Activated B cell treated with CpG ODN at 0.5 μM for 24 hours (primary cell): ENCODE measurements at regions of chr13 and their contacts with region 1.

Region 1: GRCh38 chr13:49792550-49793324 is at the start of gene KPNA3:
- DNase-seq: peak; percentile 88
- ATAC-seq: peak; percentile 89
- H3K4me3 Mint-ChIP-seq: peak within 1 kb of the TSS; percentile 97
- H3K27ac Mint-ChIP-seq: peak within 1 kb of the TSS; percentile 97
- H3K4me1 Mint-ChIP-seq: peaks cover 31% of the 10 kb centered on the region
- H3K27me3 Mint-ChIP-seq: no peaks in the 10 kb centered on the region
- CTCF ChIP-seq: no peak
- total RNA-seq, gene KPNA3: 28.6 and 28.7 TPM in 2 replicates

Region 2: GRCh38 chr13:48094781-48095502 is 1697.8 kb before region 1 on chr13 and contains the start of gene MED4:
- CTCF ChIA-PET with region 1: no interaction called
- POLR2A ChIA-PET with region 1: no interaction called
- intact Hi-C with region 1: loop called (anchors 2 kb)
- DNase-seq: peak; percentile 99
- ATAC-seq: peak; percentile 99
- H3K4me3 Mint-ChIP-seq: peak within 1 kb of the TSS; percentile 96
- H3K27ac Mint-ChIP-seq: peak within 1 kb of the TSS; percentile 90
- H3K4me1 Mint-ChIP-seq: peaks cover 34% of the 10 kb centered on the region
- H3K27me3 Mint-ChIP-seq: peaks cover 5% of the 10 kb centered on the region
- CTCF ChIP-seq: peak; percentile 84
- total RNA-seq, gene MED4: 50.4 and 51.9 TPM in 2 replicates

Region 3: GRCh38 chr13:49585220-49586157 is 207.2 kb before region 1 on chr13 and contains the start of gene RCBTB1:
- CTCF ChIA-PET with region 1: no interaction called
- POLR2A ChIA-PET with region 1: interaction called, 3 read pairs
- intact Hi-C with region 1: loop called (anchors 1 kb)
- DNase-seq: peak; percentile 73
- ATAC-seq: peak; percentile 87
- H3K4me3 Mint-ChIP-seq: peak within 1 kb of the TSS; percentile 90
- H3K27ac Mint-ChIP-seq: peak within 1 kb of the TSS; percentile 86
- H3K4me1 Mint-ChIP-seq: peaks cover 31% of the 10 kb centered on the region
- H3K27me3 Mint-ChIP-seq: no peaks in the 10 kb centered on the region
- CTCF ChIP-seq: no peak
- total RNA-seq, gene RCBTB1: 19.7 and 22.6 TPM in 2 replicates

Region 4: DNA sequence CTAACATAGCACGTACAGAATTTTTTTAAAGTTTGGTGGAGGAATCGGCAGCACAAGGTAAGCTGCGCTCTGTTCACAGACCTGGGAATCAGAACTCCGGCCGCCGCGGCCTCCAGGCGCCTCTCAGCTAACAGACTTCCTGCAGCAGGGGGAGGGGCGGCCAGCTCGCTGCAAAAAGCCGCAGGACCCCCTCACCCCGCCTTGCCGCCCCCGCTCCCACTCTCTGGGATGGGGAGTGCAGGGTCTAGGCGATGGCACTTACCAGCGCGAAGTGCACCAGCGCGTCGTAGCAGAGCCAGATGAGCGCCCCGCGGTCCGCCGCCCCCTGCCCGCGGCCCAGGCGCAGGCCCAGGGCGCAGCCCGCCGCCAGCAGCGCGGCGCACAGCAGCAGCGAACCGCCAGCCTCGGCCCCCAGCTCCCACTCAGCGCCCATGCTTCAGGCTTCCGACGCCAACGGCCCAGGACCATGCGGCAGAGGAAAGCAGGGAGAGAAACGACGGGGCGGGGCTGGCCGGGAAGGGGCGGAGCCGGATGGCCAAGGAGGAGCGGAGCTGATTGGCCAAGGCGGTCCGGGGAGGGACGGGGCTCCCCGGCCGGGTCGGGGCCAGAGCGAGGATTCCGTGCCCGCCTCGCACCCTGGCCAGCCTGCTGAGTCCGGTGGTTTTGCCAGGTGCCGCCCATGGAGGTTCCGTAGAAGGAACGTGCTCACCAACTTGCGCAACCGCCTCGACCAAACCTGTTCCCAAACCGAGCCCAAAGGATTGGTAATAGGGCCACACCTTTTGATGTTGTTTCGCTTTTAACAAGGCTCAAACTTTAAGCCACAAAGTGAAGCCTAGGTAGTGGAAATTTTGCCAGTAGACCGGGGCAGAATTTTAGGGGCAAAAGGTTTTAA is 101.5 kb before region 1 on chr13 and contains the start of gene EBPL:
- CTCF ChIA-PET with region 1: interaction called, 3 read pairs
- POLR2A ChIA-PET with region 1: interaction called, 23 read pairs
- intact Hi-C with region 1: loop called (anchors 1 kb)
- DNase-seq: peak; percentile 85
- ATAC-seq: peak; percentile 96
- H3K4me3 Mint-ChIP-seq: peak within 1 kb of the TSS; percentile 89
- H3K27ac Mint-ChIP-seq: peak within 1 kb of the TSS; percentile 79
- H3K4me1 Mint-ChIP-seq: peaks cover 27% of the 10 kb centered on the region
- H3K27me3 Mint-ChIP-seq: no peaks in the 10 kb centered on the region
- CTCF ChIP-seq: no peak
- total RNA-seq, gene EBPL: 20.0 and 22.4 TPM in 2 replicates

Region 5: DNA sequence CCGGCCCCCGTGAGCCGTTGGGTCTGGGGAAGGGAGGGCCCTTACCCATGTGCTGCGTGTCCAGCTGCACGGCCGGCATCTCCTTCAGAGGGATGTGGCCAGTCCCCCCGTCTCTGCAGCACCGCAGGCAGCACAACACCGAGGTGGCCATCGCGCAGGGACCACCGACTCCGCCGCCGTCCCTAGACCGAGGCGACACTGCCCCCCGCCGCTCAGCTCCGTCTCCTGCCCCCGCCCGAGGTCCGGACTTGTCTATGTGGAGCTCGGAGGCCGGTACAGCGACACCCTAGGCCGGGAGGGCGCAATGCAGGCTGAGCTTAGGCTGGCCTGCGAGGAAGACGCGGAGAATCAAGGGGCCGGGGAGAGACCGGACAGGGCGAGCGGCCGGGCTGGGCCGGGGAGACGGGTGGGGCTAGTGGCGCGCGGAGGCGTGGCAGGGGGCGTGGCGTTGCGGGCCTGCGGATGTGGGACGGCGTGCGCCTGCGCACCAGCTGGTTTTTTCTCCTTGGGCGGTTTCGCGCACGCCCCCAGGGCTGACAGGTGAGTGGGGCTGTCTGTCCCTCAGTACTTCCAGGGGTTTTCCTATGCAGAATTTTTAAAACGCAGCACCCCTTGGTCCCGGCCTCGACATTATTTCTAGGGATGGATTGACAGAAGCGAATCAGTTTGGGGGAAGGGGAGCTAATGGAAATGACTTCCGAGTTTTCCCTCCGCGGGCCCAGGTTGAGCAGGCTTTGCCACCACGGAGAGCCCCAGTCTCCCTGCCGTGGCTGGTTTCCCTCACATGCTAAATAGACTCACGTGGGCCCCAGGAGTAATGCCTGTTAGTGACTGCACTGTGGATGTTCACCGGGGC is 143.6 kb after region 1 on chr13 and contains the start of gene SPRYD7:
- CTCF ChIA-PET with region 1: no interaction called
- POLR2A ChIA-PET with region 1: interaction called, 17 read pairs
- intact Hi-C with region 1: loop called (anchors 1 kb)
- DNase-seq: peak; percentile 100
- ATAC-seq: peak; percentile 98
- H3K4me3 Mint-ChIP-seq: peak within 1 kb of the TSS; percentile 97
- H3K27ac Mint-ChIP-seq: peak within 1 kb of the TSS; percentile 91
- H3K4me1 Mint-ChIP-seq: peaks cover 32% of the 10 kb centered on the region
- H3K27me3 Mint-ChIP-seq: no peaks in the 10 kb centered on the region
- CTCF ChIP-seq: no peak
- total RNA-seq, gene SPRYD7: 3.7 and 4.5 TPM in 2 replicates